ENCODE measurements at regions of chr9 and their contacts with region 1.

Region 1: GRCh38 chr9:110183208-110184145 is 24.5 kb downstream of the C9orf152 start:
- DNase-seq: peak; percentile 25
- ATAC-seq: peak; percentile 91
- H3K4me3 ChIP-seq: no peak overlapping the region
- H3K27ac ChIP-seq: no peak overlapping the region
- H3K4me1 ChIP-seq: no peaks in the 10 kb centered on the region
- H3K27me3 ChIP-seq: no peaks in the 10 kb centered on the region
- CTCF ChIP-seq: peak; percentile 75 to 79 (median 76); a peak in 5 of 6 replicates
- EP300 ChIP-seq: no peak
- POLR2A ChIP-seq: no peak
- RAD21 ChIP-seq: peak; percentile 91

Region 2: DNA sequence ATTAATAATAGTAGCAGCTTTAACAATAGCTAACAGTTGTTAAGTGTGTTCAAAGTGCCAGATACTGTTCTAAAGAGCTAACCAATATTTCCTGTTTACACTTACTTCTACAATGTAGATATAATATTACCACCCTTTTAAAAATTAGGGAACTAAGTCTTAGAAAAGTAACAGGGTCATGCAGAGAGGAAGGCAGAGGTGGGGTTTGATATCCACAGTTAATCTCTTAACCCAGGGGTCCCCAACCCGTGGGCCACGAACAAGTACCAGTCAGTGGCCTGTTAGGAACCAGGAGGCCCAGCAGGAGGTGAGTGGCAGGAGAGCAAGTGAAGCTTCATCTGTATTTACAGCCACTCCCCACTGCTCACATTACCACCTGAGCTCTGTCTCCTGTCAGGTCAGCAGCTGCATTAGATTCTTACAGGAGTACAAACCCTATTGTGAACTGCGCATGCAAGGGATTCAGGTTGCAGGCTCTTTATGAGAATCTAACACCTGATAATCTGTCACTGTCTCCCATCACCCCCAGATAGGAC is 1416.8 kb before region 1 on chr9:
- CTCF ChIA-PET with region 1: no interaction called
- POLR2A ChIA-PET with region 1: no interaction called
- RAD21 ChIA-PET with region 1: no interaction called
- SMC1A ChIA-PET with region 1: no interaction called
- in situ Hi-C with region 1: no loop called
- intact Hi-C with region 1: no loop called
- DNase-seq: no peak
- ATAC-seq: no peak
- H3K4me3 ChIP-seq: no peak overlapping the region
- H3K27ac ChIP-seq: no peak overlapping the region
- H3K4me1 ChIP-seq: no peaks in the 10 kb centered on the region
- H3K27me3 ChIP-seq: no peaks in the 10 kb centered on the region
- CTCF ChIP-seq: no peak
- EP300 ChIP-seq: no peak
- POLR2A ChIP-seq: no peak
- RAD21 ChIP-seq: no peak

Region 3: DNA sequence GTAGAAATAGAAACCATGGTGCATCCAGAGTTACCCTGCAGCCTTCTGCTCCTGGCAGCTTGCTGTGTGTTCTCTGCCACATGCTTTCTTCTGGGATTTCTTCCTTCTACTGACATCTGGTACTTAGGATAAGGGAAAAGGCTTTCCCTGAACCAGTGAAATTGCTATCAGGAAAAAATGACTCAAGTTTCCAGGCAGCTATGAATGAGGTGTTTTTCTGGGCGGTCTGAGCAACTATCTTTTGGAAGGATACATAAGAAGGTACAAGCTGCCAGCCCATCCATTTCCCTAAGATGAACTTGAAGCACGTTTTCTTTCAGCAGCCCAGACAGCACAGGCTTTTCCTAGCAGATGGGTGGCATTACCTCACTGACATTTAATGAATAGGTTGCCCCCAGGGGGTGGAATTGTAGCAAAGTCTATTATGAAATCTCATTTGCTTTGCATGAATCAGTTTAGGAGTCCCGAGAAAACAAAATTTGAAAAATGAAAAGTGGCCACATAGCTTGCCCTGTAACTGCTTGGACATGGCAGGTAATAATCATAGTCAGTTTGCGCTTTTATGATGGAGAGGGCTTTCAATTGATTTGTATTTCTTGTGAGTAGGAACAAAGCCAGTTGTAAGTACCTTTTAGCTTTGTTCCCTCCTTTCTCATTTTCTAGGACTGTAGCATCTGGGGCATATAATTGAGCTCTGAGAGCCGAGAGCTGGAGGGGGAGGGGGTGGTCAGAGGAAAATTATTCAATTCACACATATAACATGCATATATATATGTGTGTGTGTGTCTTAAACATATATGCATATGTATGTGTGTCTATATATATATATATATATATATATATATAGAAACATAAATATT is 84.0 kb before region 1 on chr9:
- CTCF ChIA-PET with region 1: no interaction called
- POLR2A ChIA-PET with region 1: no interaction called
- RAD21 ChIA-PET with region 1: no interaction called
- SMC1A ChIA-PET with region 1: no interaction called
- in situ Hi-C with region 1: no loop called
- intact Hi-C with region 1: no loop called
- DNase-seq: no peak
- ATAC-seq: no peak
- H3K4me3 ChIP-seq: no peak overlapping the region
- H3K27ac ChIP-seq: no peak overlapping the region
- H3K4me1 ChIP-seq: peaks cover 42% of the 10 kb centered on the region
- H3K27me3 ChIP-seq: no peaks in the 10 kb centered on the region
- CTCF ChIP-seq: no peak
- EP300 ChIP-seq: no peak
- POLR2A ChIP-seq: no peak
- RAD21 ChIP-seq: no peak

Region 4: GRCh38 chr9:110110154-110110553 is 73.3 kb before region 1 on chr9:
- CTCF ChIA-PET with region 1: no interaction called
- POLR2A ChIA-PET with region 1: no interaction called
- RAD21 ChIA-PET with region 1: no interaction called
- SMC1A ChIA-PET with region 1: no interaction called
- in situ Hi-C with region 1: no loop called
- intact Hi-C with region 1: no loop called
- DNase-seq: peak; percentile 51
- ATAC-seq: peak; percentile 96
- H3K4me3 ChIP-seq: no peak overlapping the region
- H3K27ac ChIP-seq: no peak overlapping the region
- H3K4me1 ChIP-seq: peaks cover 27% of the 10 kb centered on the region
- H3K27me3 ChIP-seq: no peaks in the 10 kb centered on the region
- CTCF ChIP-seq: no peak
- EP300 ChIP-seq: no peak
- POLR2A ChIP-seq: no peak
- RAD21 ChIP-seq: no peak

Region 5: GRCh38 chr9:110217656-110218099 is 34.2 kb after region 1 on chr9:
- CTCF ChIA-PET with region 1: interaction called, 65 read pairs
- POLR2A ChIA-PET with region 1: no interaction called
- RAD21 ChIA-PET with region 1: interaction called, 10 read pairs
- SMC1A ChIA-PET with region 1: interaction called, 53 read pairs
- in situ Hi-C with region 1: no loop called
- intact Hi-C with region 1: loop called (anchors 2 kb)
- DNase-seq: no peak
- ATAC-seq: peak; percentile 34
- H3K4me3 ChIP-seq: no peak overlapping the region
- H3K27ac ChIP-seq: no peak overlapping the region
- H3K4me1 ChIP-seq: no peaks in the 10 kb centered on the region
- H3K27me3 ChIP-seq: no peaks in the 10 kb centered on the region
- CTCF ChIP-seq: peak; percentile 61 to 72 (median 65)
- EP300 ChIP-seq: no peak
- POLR2A ChIP-seq: no peak
- RAD21 ChIP-seq: peak; percentile 69

Region 6: GRCh38 chr9:110427497-110428104 is 244.1 kb after region 1 on chr9:
- CTCF ChIA-PET with region 1: interaction called, 8 read pairs
- POLR2A ChIA-PET with region 1: no interaction called
- RAD21 ChIA-PET with region 1: interaction called, 5 read pairs
- SMC1A ChIA-PET with region 1: interaction called, 9 read pairs
- in situ Hi-C with region 1: no loop called
- intact Hi-C with region 1: loop called (anchors 2 kb)
- DNase-seq: no peak
- ATAC-seq: peak; percentile 86
- H3K4me3 ChIP-seq: no peak overlapping the region
- H3K27ac ChIP-seq: no peak overlapping the region
- H3K4me1 ChIP-seq: no peaks in the 10 kb centered on the region
- H3K27me3 ChIP-seq: no peaks in the 10 kb centered on the region
- CTCF ChIP-seq: peak; percentile 76 to 79 (median 77)
- EP300 ChIP-seq: no peak
- POLR2A ChIP-seq: no peak
- RAD21 ChIP-seq: peak; percentile 53

Region 7: GRCh38 chr9:110828264-110828663 is 644.8 kb after region 1 on chr9:
- CTCF ChIA-PET with region 1: no interaction called
- POLR2A ChIA-PET with region 1: no interaction called
- RAD21 ChIA-PET with region 1: no interaction called
- SMC1A ChIA-PET with region 1: no interaction called
- in situ Hi-C with region 1: no loop called
- intact Hi-C with region 1: no loop called
- DNase-seq: no peak
- ATAC-seq: no peak
- H3K4me3 ChIP-seq: no peak overlapping the region
- H3K27ac ChIP-seq: no peak overlapping the region
- H3K4me1 ChIP-seq: no peaks in the 10 kb centered on the region
- H3K27me3 ChIP-seq: no peaks in the 10 kb centered on the region
- CTCF ChIP-seq: no peak
- EP300 ChIP-seq: no peak
- POLR2A ChIP-seq: no peak
- RAD21 ChIP-seq: no peak